Calu3 (cell line): ENCODE measurements at regions of chr10 and their contacts with region 1.

Region 1: GRCh38 chr10:7260412-7260900 is 150.4 kb downstream of the SFMBT2 start:
- DNase-seq: peak; percentile 26
- H3K4me3 Mint-ChIP-seq: no peak overlapping the region
- H3K27ac Mint-ChIP-seq: no peak overlapping the region
- H3K4me1 Mint-ChIP-seq: peaks cover 34% of the 10 kb centered on the region
- H3K27me3 Mint-ChIP-seq: no peaks in the 10 kb centered on the region
- CTCF ChIP-seq: peak; percentile 44

Region 2: GRCh38 chr10:7153750-7154149 is 106.7 kb before region 1 on chr10:
- CTCF ChIA-PET with region 1: no interaction called
- intact Hi-C with region 1: no loop called
- DNase-seq: no peak
- H3K4me3 Mint-ChIP-seq: no peak overlapping the region
- H3K27ac Mint-ChIP-seq: no peak overlapping the region
- H3K4me1 Mint-ChIP-seq: no peaks in the 10 kb centered on the region
- H3K27me3 Mint-ChIP-seq: peaks cover 88% of the 10 kb centered on the region
- CTCF ChIP-seq: no peak

Region 3: DNA sequence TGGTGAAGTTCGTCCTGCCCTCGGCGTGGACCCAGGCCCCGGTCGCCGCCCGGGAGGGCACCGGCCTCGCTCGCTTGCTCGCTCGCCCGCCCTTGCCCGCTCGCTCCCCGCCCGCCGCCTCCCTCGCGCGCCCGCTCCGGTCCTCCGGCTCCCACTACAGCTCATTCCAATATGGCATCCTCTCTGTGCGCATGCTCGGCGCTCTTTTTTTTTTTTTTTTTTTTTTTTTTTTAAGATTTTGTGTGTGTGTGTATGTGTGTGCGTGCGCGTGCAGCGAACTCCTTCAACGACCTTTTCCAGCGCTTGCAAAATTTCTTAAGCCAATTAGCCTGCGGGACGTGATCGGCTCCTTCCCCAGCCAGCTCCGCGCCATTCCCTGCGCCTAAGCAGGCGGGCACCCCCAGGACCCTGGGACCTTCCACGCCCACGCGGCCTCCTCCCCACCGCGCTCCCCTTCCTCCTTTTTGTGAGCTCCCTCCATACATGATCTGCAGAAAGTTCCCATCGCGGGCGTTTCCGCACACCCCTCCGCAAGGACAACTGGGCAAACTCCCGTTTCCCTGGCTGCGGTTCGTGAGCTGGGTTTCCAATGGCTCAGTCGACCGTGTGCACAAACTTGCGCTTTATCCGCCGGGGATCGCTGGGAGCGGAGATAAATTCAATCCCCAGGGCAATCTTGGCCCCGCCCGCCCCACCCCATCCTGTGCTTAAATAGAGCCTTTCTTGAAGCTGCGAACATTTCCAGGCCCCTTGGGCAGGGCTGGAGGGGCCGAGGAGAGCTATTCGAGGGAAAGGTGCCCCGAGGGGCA is 150.6 kb after region 1 on chr10 and contains the start of gene SFMBT2:
- CTCF ChIA-PET with region 1: interaction called, 4 read pairs
- intact Hi-C with region 1: loop called (anchors 2 kb)
- DNase-seq: peak; percentile 44
- H3K4me3 Mint-ChIP-seq: peak within 1 kb of the TSS; percentile 75
- H3K27ac Mint-ChIP-seq: no peak within 1 kb of the TSS
- H3K4me1 Mint-ChIP-seq: peaks cover 17% of the 10 kb centered on the region
- H3K27me3 Mint-ChIP-seq: peaks cover 47% of the 10 kb centered on the region
- CTCF ChIP-seq: no peak
- total RNA-seq, gene SFMBT2: 0.64 and 1.7 TPM in 2 replicates

Region 4: DNA sequence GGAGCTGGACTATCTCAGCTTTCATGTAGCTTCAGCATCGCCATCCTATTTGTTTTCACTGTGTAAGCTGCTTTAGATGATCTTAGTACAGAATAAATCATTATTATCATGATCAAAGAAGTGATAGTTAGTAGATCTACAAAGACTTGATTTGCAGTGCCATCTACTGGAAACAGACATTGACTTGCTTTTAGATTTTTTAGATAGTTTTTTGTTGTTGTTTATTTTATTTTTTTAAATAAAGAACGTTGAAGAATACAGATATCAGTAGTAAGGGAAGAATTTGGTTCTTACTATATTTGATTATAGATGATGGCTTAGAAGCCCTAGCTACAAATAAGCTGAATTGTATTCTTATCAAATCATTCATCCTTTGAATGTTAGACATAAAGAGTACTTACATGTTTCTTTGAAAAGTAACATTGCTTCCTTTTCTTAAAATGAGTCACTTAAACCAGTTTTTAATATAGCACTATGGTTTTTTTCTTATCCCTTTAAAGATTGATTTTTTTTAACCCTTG is 156.7 kb after region 1 on chr10:
- CTCF ChIA-PET with region 1: no interaction called
- intact Hi-C with region 1: loop called (anchors 1 kb)
- DNase-seq: no peak
- H3K4me3 Mint-ChIP-seq: no peak overlapping the region
- H3K27ac Mint-ChIP-seq: no peak overlapping the region
- H3K4me1 Mint-ChIP-seq: no peaks in the 10 kb centered on the region
- H3K27me3 Mint-ChIP-seq: peaks cover 59% of the 10 kb centered on the region
- CTCF ChIP-seq: no peak